Activated CD8-positive, alpha-beta T cell treated with anti-CD3 and anti-CD28 coated beads for 36 hours (primary cell): ENCODE measurements at regions of chr10 and their contacts with region 1.

Region 1: GRCh38 chr10:104337974-104338735 is at the start of gene ITPRIP:
- DNase-seq: peak; percentile 84
- ATAC-seq: peak; percentile 76
- H3K4me3 Mint-ChIP-seq: peak within 1 kb of the TSS; percentile 86
- H3K27ac Mint-ChIP-seq: peak within 1 kb of the TSS; percentile 100
- H3K4me1 Mint-ChIP-seq: peaks cover 45% of the 10 kb centered on the region
- H3K27me3 Mint-ChIP-seq: no peaks in the 10 kb centered on the region
- CTCF ChIP-seq: no peak
- total RNA-seq, gene ITPRIP: 18.3 to 18.9 TPM

Region 2: DNA sequence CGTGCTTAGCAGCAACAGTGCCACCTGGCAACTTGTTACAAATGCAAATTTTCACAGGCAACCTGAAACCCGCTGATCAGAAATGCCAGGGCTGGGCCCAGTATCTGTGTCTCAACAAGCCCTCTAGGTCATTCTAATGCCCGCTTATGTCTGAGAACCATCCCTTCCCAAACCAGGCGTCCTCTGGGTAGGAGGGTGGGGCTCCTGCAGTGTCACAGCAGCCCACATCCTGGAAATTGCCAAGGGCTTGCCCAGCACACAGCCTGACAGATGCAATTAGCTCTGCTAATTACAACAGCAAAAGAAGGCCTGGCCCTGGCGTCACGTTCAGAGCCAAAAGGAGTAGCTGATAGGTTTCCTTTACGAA is 15.8 kb before region 1 on chr10:
- CTCF ChIA-PET with region 1: interaction called, 5 read pairs
- POLR2A ChIA-PET with region 1: interaction called, 30 read pairs
- intact Hi-C with region 1: no loop called
- DNase-seq: peak; percentile 69
- ATAC-seq: peak; percentile 66
- H3K4me3 Mint-ChIP-seq: peak overlapping the region; percentile 16
- H3K27ac Mint-ChIP-seq: peak overlapping the region; percentile 82
- H3K4me1 Mint-ChIP-seq: peaks cover 88% of the 10 kb centered on the region
- H3K27me3 Mint-ChIP-seq: no peaks in the 10 kb centered on the region
- CTCF ChIP-seq: no peak